ENCODE measurements at regions of chr7 and their contacts with region 1.

Region 1: GRCh38 chr7:121366852-121367431 is 29.2 kb downstream of the FAM3C start:
- DNase-seq: no peak
- H3K4me3 ChIP-seq: no peak overlapping the region
- CTCF ChIP-seq: peak in 1 of 3 donors; percentile 67
- POLR2A ChIP-seq: no peak

Region 2: GRCh38 chr7:120609136-120609753 is 757.7 kb before region 1 on chr7:
- intact Hi-C with region 1: no loop called
- DNase-seq: no peak
- H3K4me3 ChIP-seq: no peak overlapping the region
- CTCF ChIP-seq: no peak
- POLR2A ChIP-seq: no peak

Region 3: GRCh38 chr7:121547544-121548092 is 180.7 kb after region 1 on chr7:
- intact Hi-C with region 1: loop called (anchors 5 kb)
- DNase-seq: no peak
- H3K4me3 ChIP-seq: no peak overlapping the region
- CTCF ChIP-seq: peak in 1 of 3 donors; percentile 36
- POLR2A ChIP-seq: no peak

Region 4: DNA sequence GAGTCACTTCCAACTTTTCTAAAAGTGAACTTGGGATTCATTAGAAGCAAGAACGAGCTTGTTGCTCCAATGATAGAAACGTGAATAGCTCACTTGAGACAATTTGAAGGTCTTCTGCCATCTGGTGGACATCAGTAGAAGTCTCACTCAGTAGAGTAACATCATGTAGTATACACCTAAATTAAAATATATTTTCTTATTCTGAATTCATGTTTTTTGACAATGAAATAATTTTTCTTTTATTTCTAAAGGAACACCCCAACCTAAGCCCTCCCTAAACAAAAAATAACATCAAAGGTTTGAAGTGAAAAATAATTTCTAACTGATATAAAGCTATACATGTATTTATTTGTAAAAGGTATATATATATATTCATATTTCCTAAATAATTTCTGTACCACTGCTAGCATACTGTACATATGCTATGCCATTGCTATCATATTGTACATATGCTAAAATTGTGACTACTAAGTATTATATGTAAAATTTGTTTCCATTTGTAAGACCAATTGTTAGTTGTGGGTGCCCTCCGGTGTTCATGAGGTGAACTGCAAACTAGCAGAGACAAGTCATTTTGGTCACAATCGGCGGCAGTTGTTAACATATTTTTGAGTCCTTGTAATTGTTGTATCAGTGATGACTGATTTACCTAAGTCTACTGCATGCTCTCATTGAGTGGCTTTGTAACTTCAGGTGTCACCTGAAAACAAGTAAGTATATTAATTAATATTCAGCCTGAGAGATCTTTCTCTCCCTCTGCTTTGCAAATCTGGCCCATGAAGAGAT is 627.9 kb after region 1 on chr7:
- intact Hi-C with region 1: loop called (anchors 10 kb)
- DNase-seq: peak in 1 of 2 donors; percentile 46
- H3K4me3 ChIP-seq: no peak overlapping the region
- CTCF ChIP-seq: no peak
- POLR2A ChIP-seq: no peak